Naive thymus-derived CD8-positive, alpha-beta T cell (primary cell): ENCODE measurements at regions of chr6 and their contacts with region 1.

Region 1: GRCh38 chr6:125301435-125302391 is at the start of gene HDDC2:
- DNase-seq: peak; percentile 10 to 77 (median 33)
- ATAC-seq: peak; percentile 42 to 57
- H3K4me3 Mint-ChIP-seq: peak within 1 kb of the TSS; percentile 85 to 96 (median 92)
- H3K27ac Mint-ChIP-seq: peak within 1 kb of the TSS; percentile 89 to 98 (median 93)
- H3K4me1 Mint-ChIP-seq: peaks cover 46 to 60% (median 56%) of the 10 kb centered on the region in 4 donors
- H3K27me3 Mint-ChIP-seq: peaks cover 0 to 10% (median 4%) of the 10 kb centered on the region in 5 donors
- polyA plus RNA-seq, gene HDDC2: 118 to 134 (median 119) TPM

Region 2: DNA sequence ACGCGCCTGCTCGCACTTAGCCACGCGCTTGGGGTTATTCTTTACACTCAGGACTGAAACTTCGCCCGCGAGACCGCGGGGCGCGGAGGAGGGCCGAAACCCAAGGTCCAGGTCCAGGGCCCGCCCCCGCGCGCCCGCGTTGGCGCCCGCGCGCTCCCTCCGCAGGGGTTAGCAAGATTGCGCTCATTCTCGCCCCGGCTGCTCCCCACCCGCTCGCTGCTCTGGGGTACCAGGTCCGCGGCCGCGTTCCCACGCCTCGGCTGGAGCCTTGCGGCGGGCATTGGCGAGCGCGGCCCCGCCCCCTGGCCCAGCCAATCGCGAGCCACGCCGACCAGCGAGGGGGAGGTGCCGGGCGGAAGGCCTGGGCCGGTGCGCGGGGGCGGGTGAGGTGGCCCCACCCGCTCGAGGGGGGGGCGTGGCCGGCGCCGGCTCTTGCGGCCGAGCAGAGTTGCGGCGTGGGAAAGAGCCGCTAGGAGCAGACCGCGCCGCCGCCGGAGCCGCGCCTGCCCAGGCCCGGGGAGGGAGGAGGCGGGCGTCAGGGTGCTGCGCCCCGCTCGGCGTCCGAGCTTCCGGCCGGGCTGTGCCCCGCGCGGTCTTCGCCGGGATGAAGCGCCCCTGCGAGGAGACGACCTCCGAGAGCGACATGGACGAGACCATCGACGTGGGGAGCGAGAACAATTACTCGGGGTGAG is 447.6 kb after region 1 on chr6 and contains the start of gene HEY2:
- POLR2A ChIA-PET with region 1: interaction called, 18 read pairs
- DNase-seq: peak; percentile 65 to 86 (median 74)
- ATAC-seq: peak; percentile 65 to 69
- H3K4me3 Mint-ChIP-seq: peak within 1 kb of the TSS; percentile 87 to 95 (median 92)
- H3K27ac Mint-ChIP-seq: peak within 1 kb of the TSS; percentile 57 to 91 (median 79)
- H3K4me1 Mint-ChIP-seq: peaks cover 17 to 42% (median 35%) of the 10 kb centered on the region in 4 donors
- H3K27me3 Mint-ChIP-seq: peaks cover 18 to 46% (median 34%) of the 10 kb centered on the region in 5 donors
- polyA plus RNA-seq, gene HEY2: 0.18 to 0.32 (median 0.27) TPM